MCF 10A (cell line): ENCODE measurements at regions of chr2 and their contacts with region 1.

Region 1: DNA sequence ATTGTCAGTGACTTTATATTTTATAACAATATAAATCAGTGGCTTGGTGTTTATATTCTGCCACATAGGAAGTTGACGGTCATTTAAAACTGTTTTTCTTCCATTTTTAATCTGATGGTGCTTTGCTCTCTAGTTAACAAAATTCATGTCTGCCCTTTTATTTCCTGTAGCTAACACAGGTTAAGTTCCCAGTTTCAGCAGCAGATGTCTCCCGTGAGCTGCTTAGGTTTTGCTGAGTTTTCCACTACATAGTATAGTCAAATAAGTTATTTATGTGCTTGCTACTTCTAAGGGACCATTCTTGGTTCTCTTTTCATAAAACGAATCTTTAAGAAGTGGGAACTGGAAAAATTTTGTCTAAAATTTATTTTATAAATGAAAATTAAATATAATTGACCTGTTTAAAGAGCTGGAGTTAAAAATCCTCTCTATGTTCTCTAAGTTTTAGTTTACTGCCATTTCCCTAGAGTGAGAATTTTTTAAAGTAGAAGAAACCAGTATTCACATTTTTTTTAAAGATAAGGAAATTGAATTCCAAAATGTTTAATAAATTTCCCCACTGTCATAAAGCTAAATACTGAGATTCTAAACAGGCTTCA is 20.6 kb downstream of the HTR2B start:
- DNase-seq: peak; percentile 68
- H3K4me3 Mint-ChIP-seq: no peak overlapping the region
- H3K27ac Mint-ChIP-seq: no peak overlapping the region
- H3K4me1 Mint-ChIP-seq: peaks cover 15% of the 10 kb centered on the region
- H3K27me3 Mint-ChIP-seq: no peaks in the 10 kb centered on the region
- CTCF ChIP-seq: peak; percentile 77

Region 2: DNA sequence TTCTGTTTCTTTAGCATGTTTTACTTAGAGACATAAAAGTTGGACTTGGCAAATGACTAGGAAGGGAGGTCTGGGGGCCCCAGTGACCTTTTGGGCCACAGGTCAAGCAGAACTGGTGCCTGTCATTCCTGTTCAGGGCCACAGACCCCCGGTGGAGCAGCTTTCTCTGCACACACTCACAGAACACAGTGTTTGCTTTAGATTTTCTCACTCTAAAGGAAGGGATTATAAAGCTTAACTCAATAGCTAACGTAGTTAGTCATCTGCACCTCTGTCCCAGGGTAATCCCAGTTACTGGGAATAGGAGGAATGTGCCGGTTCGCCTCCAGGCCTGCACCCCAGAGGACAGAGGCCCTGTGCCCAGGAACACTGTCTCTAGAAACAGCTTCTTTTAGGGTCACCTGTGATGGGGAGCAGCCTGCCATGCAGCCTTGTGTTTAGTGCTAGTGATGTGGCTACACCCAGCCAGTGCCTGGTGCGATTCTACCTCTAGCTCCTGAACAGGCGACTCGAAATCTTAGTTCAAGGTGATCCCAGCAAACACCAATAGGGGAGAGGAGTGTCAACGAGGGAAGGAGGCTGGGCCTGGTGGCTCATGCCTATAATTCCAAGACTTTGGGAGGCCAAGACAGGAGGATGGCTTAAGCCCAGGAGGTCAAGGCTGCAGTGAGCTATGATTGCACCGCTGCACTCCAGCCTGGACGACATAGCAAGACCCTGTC is 96.8 kb before region 1 on chr2:
- CTCF ChIA-PET with region 1: no interaction called
- POLR2A ChIA-PET with region 1: no interaction called
- intact Hi-C with region 1: no loop called
- DNase-seq: no peak
- H3K4me3 Mint-ChIP-seq: no peak overlapping the region
- H3K27ac Mint-ChIP-seq: no peak overlapping the region
- H3K4me1 Mint-ChIP-seq: no peaks in the 10 kb centered on the region
- H3K27me3 Mint-ChIP-seq: peaks cover 59% of the 10 kb centered on the region
- CTCF ChIP-seq: no peak

Region 3: DNA sequence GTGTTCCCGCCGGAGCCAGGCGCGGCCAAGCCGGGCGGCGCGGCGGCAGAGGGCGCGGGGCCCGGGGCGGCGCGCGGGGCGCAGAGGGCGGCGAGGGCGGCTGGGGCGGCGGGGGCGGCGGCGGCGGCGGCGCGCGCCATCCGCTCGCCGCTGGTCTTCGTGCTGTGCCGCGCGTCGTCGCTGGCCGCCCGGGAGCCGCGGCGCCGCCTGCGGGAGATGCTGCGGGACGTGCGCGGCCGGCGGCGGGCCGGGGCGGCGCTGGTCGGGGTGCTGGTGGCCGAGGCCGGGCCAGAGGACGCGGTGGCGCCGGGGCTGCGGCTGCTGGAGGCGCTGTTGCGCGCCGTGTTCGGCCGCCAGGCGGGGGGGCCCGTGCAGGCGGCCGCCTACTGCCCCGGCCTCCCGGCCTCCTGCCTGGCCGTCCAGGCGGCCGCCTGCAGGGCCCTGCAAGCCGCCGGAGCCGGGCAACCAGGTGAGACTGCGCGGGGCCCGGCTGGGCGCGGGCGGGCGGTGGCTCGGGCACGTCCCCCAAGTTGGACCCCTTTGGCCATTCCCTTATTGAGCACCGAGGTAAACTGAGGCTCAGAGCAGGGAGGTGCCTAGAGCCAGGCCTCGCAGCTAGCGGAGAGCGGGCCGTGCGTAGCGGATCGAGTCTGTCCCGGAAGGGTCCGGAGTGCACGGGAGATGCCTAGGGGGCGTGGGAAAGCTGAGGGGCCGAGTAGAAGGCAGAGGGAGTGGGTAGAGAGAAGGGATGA is 66.3 kb before region 1 on chr2:
- CTCF ChIA-PET with region 1: no interaction called
- POLR2A ChIA-PET with region 1: no interaction called
- intact Hi-C with region 1: no loop called
- DNase-seq: no peak
- H3K4me3 Mint-ChIP-seq: no peak overlapping the region
- H3K27ac Mint-ChIP-seq: no peak overlapping the region
- H3K4me1 Mint-ChIP-seq: no peaks in the 10 kb centered on the region
- H3K27me3 Mint-ChIP-seq: peaks cover 83% of the 10 kb centered on the region
- CTCF ChIP-seq: no peak

Region 4: GRCh38 chr2:231198291-231199173 is 94.3 kb after region 1 on chr2 and contains the start of gene ARMC9:
- CTCF ChIA-PET with region 1: interaction called, 6 read pairs
- POLR2A ChIA-PET with region 1: interaction called, 3 read pairs
- intact Hi-C with region 1: loop called (anchors 10 kb)
- DNase-seq: peak; percentile 65
- H3K4me3 Mint-ChIP-seq: peak within 1 kb of the TSS; percentile 88
- H3K27ac Mint-ChIP-seq: peak within 1 kb of the TSS; percentile 89
- H3K4me1 Mint-ChIP-seq: peaks cover 12% of the 10 kb centered on the region
- H3K27me3 Mint-ChIP-seq: peaks cover 29% of the 10 kb centered on the region
- CTCF ChIP-seq: no peak
- total RNA-seq, gene ARMC9: 16.5 and 19.8 TPM in 2 replicates

Region 5: DNA sequence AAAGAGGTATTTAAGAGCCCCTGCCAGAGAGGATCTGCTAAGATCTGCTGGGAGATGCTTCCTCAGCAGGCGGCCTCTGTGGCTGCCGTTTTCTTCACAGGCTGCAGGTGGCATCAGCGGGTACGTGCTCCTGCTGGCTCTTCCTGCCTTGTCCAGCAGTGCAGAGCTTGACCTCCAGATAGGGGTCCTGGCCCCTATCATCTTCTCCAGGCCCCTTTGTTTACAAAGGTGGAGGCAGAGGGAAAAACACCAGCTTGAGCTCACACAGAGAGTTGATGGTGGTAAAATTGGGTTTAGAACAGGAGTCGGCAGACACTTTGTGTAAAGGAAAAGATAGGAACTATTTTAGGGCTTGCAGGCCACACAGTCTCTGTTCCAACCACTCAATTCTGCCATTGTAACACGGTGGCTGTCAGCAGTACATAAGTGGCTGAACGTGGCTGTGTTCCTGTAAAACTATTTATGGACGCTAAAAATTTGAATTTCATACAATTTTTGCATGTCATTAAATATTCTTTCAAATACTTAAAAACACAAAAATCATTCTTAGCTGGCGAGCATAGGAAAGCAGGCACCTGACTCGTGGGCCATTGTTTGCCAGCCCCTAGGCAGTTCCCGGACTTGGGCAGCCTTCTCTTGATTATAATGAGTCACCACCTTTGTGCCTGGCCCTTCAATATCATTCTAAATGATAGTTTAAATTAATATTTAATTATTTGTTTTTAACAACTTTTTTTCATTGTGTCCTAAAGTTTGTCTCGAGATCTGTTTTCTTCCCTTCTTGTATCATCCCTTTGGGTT is 193.1 kb after region 1 on chr2:
- CTCF ChIA-PET with region 1: no interaction called
- POLR2A ChIA-PET with region 1: no interaction called
- intact Hi-C with region 1: loop called (anchors 10 kb)
- DNase-seq: peak; percentile 51
- H3K4me3 Mint-ChIP-seq: no peak overlapping the region
- H3K27ac Mint-ChIP-seq: no peak overlapping the region
- H3K4me1 Mint-ChIP-seq: no peaks in the 10 kb centered on the region
- H3K27me3 Mint-ChIP-seq: no peaks in the 10 kb centered on the region
- CTCF ChIP-seq: peak; percentile 42

Region 6: DNA sequence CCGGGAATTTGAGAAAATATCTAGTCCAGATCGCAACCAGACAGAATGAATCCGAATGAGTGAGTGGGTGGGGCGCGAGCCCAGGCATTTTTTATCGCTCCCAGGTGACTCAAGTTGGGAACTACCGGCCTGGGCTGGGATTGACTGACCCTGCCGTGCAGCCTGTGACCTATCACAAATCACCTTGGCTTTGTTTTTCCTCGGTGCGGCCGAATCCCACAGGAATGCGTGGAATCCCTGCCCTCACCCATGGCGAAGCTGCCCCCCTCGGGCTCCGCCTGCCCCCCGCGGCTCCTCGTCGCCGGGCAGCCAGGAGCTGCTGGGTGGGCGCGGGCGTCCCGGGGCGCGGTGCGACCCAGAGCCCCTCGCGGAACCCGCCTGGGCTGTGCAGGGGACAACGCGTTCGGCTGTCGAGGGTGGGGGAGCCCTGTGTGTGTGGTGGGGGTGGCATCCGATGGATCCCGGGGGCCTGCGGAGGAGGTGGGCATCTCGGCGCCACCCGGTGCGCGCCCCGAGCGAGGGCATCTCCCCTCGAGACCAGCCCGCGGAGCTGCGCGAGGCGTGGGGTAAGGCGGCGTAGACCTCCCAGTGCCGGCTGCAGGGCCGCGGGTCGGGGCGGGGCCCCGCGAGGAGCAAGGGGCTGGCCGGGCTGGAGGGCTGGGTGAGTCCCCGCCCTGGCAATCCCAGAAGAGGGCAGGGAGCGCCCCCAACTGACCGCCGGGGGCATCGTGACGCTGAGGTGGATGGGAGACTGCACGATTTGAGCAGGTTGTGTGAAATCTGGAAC is 307.8 kb after region 1 on chr2:
- CTCF ChIA-PET with region 1: interaction called, 15 read pairs
- POLR2A ChIA-PET with region 1: no interaction called
- intact Hi-C with region 1: loop called (anchors 1 kb)
- DNase-seq: peak; percentile 83
- H3K4me3 Mint-ChIP-seq: peak overlapping the region; percentile 70
- H3K27ac Mint-ChIP-seq: no peak overlapping the region
- H3K4me1 Mint-ChIP-seq: no peaks in the 10 kb centered on the region
- H3K27me3 Mint-ChIP-seq: no peaks in the 10 kb centered on the region
- CTCF ChIP-seq: peak; percentile 89

Region 7: GRCh38 chr2:231452799-231453508 is 348.7 kb after region 1 on chr2:
- CTCF ChIA-PET with region 1: interaction called, 5 read pairs
- POLR2A ChIA-PET with region 1: no interaction called
- intact Hi-C with region 1: loop called (anchors 1 kb)
- DNase-seq: peak; percentile 30
- H3K4me3 Mint-ChIP-seq: no peak overlapping the region
- H3K27ac Mint-ChIP-seq: peak overlapping the region; percentile 42
- H3K4me1 Mint-ChIP-seq: no peaks in the 10 kb centered on the region
- H3K27me3 Mint-ChIP-seq: no peaks in the 10 kb centered on the region
- CTCF ChIP-seq: no peak